CD8-positive, alpha-beta memory T cell (primary cell): ENCODE measurements at regions of chr6 and their contacts with region 1.

Region 1: GRCh38 chr6:131199568-131200272 is 64.5 kb downstream of the AKAP7 start:
- DNase-seq: peak; percentile 42 to 88 (median 84)
- H3K4me3 ChIP-seq: peak overlapping the region; percentile 37
- H3K4me3 Mint-ChIP-seq: peak overlapping the region; percentile 83 to 89 (median 86)
- H3K27ac ChIP-seq: peak overlapping the region; percentile 66
- H3K27ac Mint-ChIP-seq: peak overlapping the region; percentile 89 to 99 (median 96)
- H3K4me1 ChIP-seq: peaks cover 60% of the 10 kb centered on the region
- H3K4me1 Mint-ChIP-seq: peaks cover 59 to 64% (median 61%) of the 10 kb centered on the region in 3 donors
- H3K27me3 ChIP-seq: no peaks in the 10 kb centered on the region
- H3K27me3 Mint-ChIP-seq: no peaks in the 10 kb centered on the region

Region 2: DNA sequence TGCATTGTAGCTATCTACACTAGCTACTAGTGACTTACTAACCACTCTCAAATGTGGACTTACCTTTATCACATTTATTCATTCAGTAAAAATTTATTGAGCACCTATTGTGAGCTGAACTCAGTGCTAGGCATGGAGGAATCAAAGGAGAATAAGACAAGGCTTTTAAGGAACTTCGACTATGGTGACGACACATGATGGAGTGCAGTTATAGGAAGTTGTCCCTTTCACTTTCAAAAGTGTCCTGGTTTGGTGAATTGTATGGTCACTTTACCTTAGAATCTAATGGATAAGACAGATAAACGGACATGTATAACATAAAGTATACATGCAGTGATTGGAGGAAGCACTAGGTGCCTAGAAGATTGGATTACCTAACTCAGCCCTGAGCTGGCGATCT is 60.1 kb before region 1 on chr6:
- CTCF ChIA-PET with region 1: no interaction called
- POLR2A ChIA-PET with region 1: no interaction called
- DNase-seq: no peak
- H3K4me3 ChIP-seq: no peak overlapping the region
- H3K4me3 Mint-ChIP-seq: no peak overlapping the region
- H3K27ac ChIP-seq: no peak overlapping the region
- H3K27ac Mint-ChIP-seq: no peak overlapping the region
- H3K4me1 ChIP-seq: peaks cover 10% of the 10 kb centered on the region
- H3K4me1 Mint-ChIP-seq: peaks cover 16 to 43% (median 19%) of the 10 kb centered on the region in 3 donors
- H3K27me3 ChIP-seq: no peaks in the 10 kb centered on the region
- H3K27me3 Mint-ChIP-seq: peaks cover 0 to 1% of the 10 kb centered on the region in 2 donors

Region 3: DNA sequence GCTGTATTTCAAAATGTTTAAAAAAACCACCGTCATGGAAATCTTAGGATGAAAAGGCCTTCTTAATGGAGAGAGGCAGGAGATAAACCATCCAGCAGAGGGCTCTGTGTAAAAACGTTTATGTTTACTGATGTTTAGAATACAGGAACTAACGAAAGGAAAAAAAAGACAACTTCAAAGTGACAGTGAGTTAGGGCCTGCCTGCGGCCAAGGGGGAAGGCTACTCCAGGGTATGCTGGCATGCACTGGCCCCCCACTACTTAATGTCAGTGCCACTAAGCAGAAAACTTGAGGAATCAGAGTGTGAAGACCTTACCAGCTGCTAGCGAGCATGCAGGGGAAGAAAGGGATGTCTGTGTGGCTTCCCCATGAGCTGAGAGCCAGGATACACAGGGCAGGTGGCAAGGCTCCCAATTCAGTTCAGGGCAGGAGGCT is 16.7 kb before region 1 on chr6:
- CTCF ChIA-PET with region 1: interaction called, 37 read pairs
- POLR2A ChIA-PET with region 1: interaction called, 4 read pairs
- DNase-seq: peak in 3 of 5 donors; percentile 41 to 56 (median 47)
- H3K4me3 ChIP-seq: no peak overlapping the region
- H3K4me3 Mint-ChIP-seq: peak overlapping the region in 6 of 7 donors; percentile 38 to 91 (median 64)
- H3K27ac ChIP-seq: no peak overlapping the region
- H3K27ac Mint-ChIP-seq: peak overlapping the region in 7 of 8 donors; percentile 71 to 96 (median 90)
- H3K4me1 ChIP-seq: peaks cover 7% of the 10 kb centered on the region
- H3K4me1 Mint-ChIP-seq: peaks cover 7 to 12% (median 10%) of the 10 kb centered on the region in 3 donors
- H3K27me3 ChIP-seq: no peaks in the 10 kb centered on the region
- H3K27me3 Mint-ChIP-seq: no peaks in the 10 kb centered on the region

Region 4: GRCh38 chr6:131290955-131291354 is 91.2 kb after region 1 on chr6:
- CTCF ChIA-PET with region 1: no interaction called
- POLR2A ChIA-PET with region 1: no interaction called
- DNase-seq: no peak
- H3K4me3 ChIP-seq: no peak overlapping the region
- H3K4me3 Mint-ChIP-seq: no peak overlapping the region
- H3K27ac ChIP-seq: no peak overlapping the region
- H3K27ac Mint-ChIP-seq: no peak overlapping the region
- H3K4me1 ChIP-seq: peaks cover 18% of the 10 kb centered on the region
- H3K4me1 Mint-ChIP-seq: peaks cover 9 to 20% (median 10%) of the 10 kb centered on the region in 3 donors
- H3K27me3 ChIP-seq: no peaks in the 10 kb centered on the region
- H3K27me3 Mint-ChIP-seq: peaks cover 0 to 3% of the 10 kb centered on the region in 2 donors

Region 5: GRCh38 chr6:131519670-131520436 is 320.1 kb after region 1 on chr6:
- CTCF ChIA-PET with region 1: interaction called, 15 read pairs
- POLR2A ChIA-PET with region 1: interaction called, 3 read pairs
- DNase-seq: peak in 3 of 5 donors; percentile 10 to 55 (median 27)
- H3K4me3 ChIP-seq: no peak overlapping the region
- H3K4me3 Mint-ChIP-seq: no peak overlapping the region
- H3K27ac ChIP-seq: no peak overlapping the region
- H3K27ac Mint-ChIP-seq: peak overlapping the region in 1 of 8 donors; percentile 3
- H3K4me1 ChIP-seq: peaks cover 12% of the 10 kb centered on the region
- H3K4me1 Mint-ChIP-seq: peaks cover 12 to 25% (median 18%) of the 10 kb centered on the region in 3 donors
- H3K27me3 ChIP-seq: no peaks in the 10 kb centered on the region
- H3K27me3 Mint-ChIP-seq: peaks cover 1 to 4% of the 10 kb centered on the region in 2 donors